CD4-positive, alpha-beta T cell (primary cell): ENCODE measurements at regions of chr1 and their contacts with region 1.

Region 1: DNA sequence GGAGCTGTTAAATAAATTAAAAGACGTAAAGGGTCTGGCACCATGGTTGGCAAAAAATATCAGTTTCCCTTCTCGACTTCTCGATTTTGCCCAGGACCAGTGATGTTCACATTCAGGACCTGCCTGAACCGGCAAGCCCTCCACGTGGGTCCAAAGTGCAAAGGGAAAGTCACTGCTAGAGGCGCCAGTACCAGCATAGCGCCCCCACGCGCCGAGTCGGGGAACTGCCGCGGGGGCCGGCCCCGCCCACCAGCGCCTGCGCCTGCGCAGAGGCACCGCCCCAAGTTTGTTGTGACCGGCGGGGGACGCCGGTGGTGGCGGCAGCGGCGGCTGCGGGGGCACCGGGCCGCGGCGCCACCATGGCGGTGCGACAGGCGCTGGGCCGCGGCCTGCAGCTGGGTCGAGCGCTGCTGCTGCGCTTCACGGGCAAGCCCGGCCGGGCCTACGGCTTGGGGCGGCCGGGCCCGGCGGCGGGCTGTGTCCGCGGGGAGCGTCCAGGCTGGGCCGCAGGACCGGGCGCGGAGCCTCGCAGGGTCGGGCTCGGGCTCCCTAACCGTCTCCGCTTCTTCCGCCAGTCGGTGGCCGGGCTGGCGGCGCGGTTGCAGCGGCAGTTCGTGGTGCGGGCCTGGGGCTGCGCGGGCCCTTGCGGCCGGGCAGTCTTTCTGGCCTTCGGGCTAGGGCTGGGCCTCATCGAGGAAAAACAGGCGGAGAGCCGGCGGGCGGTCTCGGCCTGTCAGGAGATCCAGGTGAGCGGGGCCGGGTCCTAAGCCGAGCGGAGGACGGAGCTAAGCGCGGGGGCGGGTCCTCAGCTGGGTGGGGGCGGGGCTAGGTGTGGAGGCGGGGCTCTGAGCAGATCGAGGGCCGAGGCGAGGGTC is at the start of gene PINK1:
- DNase-seq: peak; percentile 72 to 97 (median 86)
- ATAC-seq: peak; percentile 84
- H3K4me3 ChIP-seq: peak within 1 kb of the TSS; percentile 69
- H3K4me3 Mint-ChIP-seq: peak within 1 kb of the TSS; percentile 94
- H3K27ac ChIP-seq: peak within 1 kb of the TSS; percentile 52 to 72
- H3K27ac Mint-ChIP-seq: peak within 1 kb of the TSS; percentile 87
- H3K4me1 ChIP-seq: peaks cover 18% of the 10 kb centered on the region
- H3K4me1 Mint-ChIP-seq: peaks cover 12% of the 10 kb centered on the region
- H3K27me3 ChIP-seq: peaks cover 0 to 3% of the 10 kb centered on the region in 2 experiments
- H3K27me3 Mint-ChIP-seq: peaks cover 5% of the 10 kb centered on the region
- CTCF ChIP-seq: peak; percentile 99
- total RNA-seq, gene PINK1: 6.6 to 7.5 TPM

Region 2: DNA sequence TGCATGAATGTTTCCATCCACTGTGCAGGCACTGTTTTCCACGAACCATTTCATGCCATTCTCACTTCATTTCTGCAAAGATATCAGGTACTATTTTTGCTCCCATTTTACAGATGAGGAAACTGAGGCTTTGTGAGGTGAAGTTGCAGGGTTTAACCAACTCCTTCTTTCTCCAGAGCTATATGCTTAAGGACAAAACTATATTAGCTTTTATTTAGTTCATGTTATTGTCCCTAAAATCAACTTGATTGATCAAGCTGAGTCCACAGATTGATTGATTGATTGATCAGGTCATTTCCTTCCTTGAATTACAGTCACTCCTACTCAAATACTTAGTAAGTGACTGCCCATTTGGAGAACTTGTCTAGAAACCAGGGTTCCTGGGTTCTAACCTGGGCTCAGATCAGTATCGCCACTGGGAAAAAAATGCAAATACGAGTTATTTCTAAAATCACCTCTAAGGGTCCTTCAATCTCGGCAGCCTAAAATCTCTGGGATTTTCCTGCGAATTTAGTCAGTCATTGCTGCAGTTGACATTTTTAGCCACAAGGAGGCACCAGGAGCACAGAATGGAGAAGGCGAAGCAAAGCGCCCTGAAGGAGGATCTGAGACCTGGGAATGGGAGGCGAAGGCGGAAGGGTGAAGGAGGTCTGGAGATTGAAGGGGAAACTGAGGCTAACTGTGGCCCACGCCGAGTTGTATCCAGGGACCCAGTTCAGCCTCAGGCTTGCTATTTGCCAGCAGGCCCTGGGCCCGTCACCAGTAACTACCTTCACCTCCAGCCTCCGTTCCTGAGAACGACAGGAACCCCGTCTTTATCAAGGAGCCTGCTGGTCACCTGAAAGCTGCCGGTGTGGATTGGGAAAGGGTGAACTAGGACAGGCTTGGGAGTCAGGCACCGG is 111.2 kb before region 1 on chr1:
- CTCF ChIA-PET with region 1: interaction called, 4 read pairs
- POLR2A ChIA-PET with region 1: interaction called, 3 read pairs
- intact Hi-C with region 1: loop called in 1 of 2 experiments (anchors 2 kb)
- DNase-seq: peak; percentile 38 to 77 (median 59)
- ATAC-seq: peak; percentile 63
- H3K4me3 ChIP-seq: no peak overlapping the region
- H3K4me3 Mint-ChIP-seq: no peak overlapping the region
- H3K27ac ChIP-seq: no peak overlapping the region
- H3K27ac Mint-ChIP-seq: no peak overlapping the region
- H3K4me1 ChIP-seq: no peaks in the 10 kb centered on the region
- H3K4me1 Mint-ChIP-seq: no peaks in the 10 kb centered on the region
- H3K27me3 ChIP-seq: peaks cover under 1 to 4% of the 10 kb centered on the region in 2 experiments
- H3K27me3 Mint-ChIP-seq: peaks cover 37% of the 10 kb centered on the region
- CTCF ChIP-seq: peak; percentile 79

Region 3: DNA sequence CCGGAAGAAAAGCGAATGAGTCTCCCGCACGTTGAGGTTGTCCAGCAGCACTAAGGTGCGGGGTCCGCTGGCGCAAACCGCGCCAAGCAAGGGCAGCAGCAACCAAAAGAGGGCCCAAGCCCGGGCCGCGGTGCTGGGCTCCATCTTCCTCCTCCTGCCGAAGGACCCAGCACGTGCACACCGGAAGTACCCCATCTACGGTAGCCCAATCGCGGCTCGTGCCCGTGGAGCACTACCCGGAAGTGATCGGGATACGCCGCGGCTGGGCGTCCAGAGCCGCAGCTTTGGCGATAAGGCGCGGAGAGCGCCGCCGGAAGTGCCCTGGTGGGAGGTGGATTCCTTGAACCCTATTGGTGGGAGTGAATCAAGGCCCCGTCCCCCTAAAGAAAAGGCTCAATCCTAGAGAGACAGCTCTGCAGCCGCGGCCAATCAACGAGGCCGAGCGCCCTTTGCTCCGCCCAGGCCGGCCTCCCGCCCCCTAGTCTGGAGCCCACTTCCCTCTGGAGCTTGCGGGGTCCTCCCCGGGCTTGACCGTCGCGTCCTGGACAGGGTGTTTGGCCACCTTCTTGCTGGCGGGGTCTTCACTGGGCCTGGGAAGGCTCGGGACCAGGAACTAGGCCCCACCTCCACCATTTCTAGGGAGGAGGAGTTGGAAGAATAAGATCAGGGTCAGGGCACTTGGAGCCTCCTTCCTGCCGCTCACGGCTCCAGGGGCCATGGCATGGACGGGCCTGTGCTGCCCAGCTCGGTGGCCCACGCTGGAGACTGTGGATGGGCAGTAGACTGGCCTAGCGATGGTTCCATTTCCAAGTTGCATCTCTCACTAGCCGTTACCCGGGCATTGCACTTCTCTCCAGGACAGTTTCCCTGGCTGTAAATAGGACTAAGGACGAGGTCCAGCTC is 28.0 kb after region 1 on chr1 and contains the start of gene DDOST:
- CTCF ChIA-PET with region 1: interaction called, 6 read pairs
- POLR2A ChIA-PET with region 1: interaction called, 35 read pairs
- intact Hi-C with region 1: loop called in 1 of 2 experiments (anchors 2 kb)
- DNase-seq: peak; percentile 86 to 98 (median 93)
- ATAC-seq: peak; percentile 96
- H3K4me3 ChIP-seq: peak within 1 kb of the TSS; percentile 99
- H3K4me3 Mint-ChIP-seq: peak within 1 kb of the TSS; percentile 97
- H3K27ac ChIP-seq: peak within 1 kb of the TSS; percentile 77 to 84
- H3K27ac Mint-ChIP-seq: peak within 1 kb of the TSS; percentile 88
- H3K4me1 ChIP-seq: peaks cover 45% of the 10 kb centered on the region
- H3K4me1 Mint-ChIP-seq: peaks cover 50% of the 10 kb centered on the region
- H3K27me3 ChIP-seq: no peaks in the 10 kb centered on the region
- H3K27me3 Mint-ChIP-seq: no peaks in the 10 kb centered on the region
- CTCF ChIP-seq: peak; percentile 54
- total RNA-seq, gene DDOST: 96.1 to 101 TPM

Region 4: GRCh38 chr1:21270086-21270689 is 636.8 kb after region 1 on chr1:
- CTCF ChIA-PET with region 1: no interaction called
- POLR2A ChIA-PET with region 1: no interaction called
- intact Hi-C with region 1: no loop called
- DNase-seq: peak; percentile 78 to 89 (median 84)
- ATAC-seq: peak; percentile 93
- H3K4me3 ChIP-seq: no peak overlapping the region
- H3K4me3 Mint-ChIP-seq: no peak overlapping the region
- H3K27ac ChIP-seq: no peak overlapping the region
- H3K27ac Mint-ChIP-seq: peak overlapping the region; percentile 9
- H3K4me1 ChIP-seq: peaks cover 17% of the 10 kb centered on the region
- H3K4me1 Mint-ChIP-seq: peaks cover 33% of the 10 kb centered on the region
- H3K27me3 ChIP-seq: no peaks in the 10 kb centered on the region
- H3K27me3 Mint-ChIP-seq: no peaks in the 10 kb centered on the region
- CTCF ChIP-seq: peak; percentile 89